ENCODE measurements at regions of chr14 and their contacts with region 1.

Region 1: DNA sequence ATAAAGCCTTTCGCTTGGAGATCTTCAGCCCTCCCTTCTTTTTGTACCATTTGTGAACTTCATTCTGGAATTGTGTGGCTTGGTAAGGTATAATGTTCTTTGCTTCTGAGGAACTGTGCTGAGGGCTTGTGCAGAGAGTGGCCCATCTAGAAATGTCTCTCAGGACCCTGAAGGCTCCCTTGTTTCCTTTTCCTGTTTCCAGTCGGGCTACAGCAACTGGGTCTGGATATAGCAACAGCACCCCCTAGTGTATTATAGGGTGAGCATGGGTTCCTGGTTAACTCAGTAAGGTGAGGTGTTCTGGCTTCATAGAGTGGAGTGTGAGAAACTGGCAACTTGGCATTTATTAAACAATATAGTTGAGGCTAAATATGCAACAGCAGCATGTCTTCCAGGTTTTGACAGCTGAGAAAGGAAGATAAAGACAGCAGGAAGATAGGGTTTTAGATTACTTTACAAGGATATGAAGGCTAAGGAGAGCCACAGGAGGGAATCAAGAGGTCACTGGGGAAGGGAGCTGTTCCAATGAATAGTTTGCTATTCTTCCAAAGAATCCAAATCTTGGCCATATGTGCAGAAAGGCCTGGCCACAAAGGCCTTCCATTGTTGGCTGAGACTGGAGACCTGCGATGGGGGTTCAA is 49.1 kb upstream of the RNU6-8 start:
- DNase-seq: no peak
- H3K4me3 ChIP-seq: no peak overlapping the region
- H3K27ac ChIP-seq: peak overlapping the region in 1 of 8 donors; percentile 27
- H3K4me1 ChIP-seq: peaks cover 0 to 16% (median 1%) of the 10 kb centered on the region in 6 donors
- H3K27me3 ChIP-seq: no peaks in the 10 kb centered on the region
- CTCF ChIP-seq: peak; percentile 67 to 87 (median 82)
- POLR2A ChIP-seq: no peak

Region 2: DNA sequence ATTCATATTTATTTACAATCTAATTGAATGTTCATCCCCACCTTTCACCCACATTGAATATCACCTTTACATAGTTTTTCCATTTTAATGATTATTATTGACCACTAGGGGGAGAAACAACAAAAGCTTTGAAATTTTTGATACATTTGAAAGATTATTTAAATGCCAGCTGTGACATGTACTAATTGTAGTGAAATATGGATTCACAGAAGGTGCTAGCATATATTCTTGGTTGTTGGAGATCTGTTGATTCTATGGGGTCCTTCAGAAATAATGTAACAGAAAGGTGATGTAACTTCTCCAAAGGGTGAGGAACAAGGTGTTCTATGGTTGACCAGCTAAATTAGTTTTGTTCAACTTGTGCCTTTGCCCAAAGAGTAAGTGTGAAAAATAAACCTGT is 741.9 kb before region 1 on chr14:
- intact Hi-C with region 1: loop called (anchors 5 kb)
- DNase-seq: no peak
- H3K4me3 ChIP-seq: no peak overlapping the region
- H3K27ac ChIP-seq: no peak overlapping the region
- H3K4me1 ChIP-seq: peaks cover 0 to 5% (median 0%) of the 10 kb centered on the region in 6 donors
- H3K27me3 ChIP-seq: no peaks in the 10 kb centered on the region
- CTCF ChIP-seq: peak; percentile 20 to 69 (median 54)
- POLR2A ChIP-seq: no peak

Region 3: GRCh38 chr14:31926123-31926522 is 326.0 kb before region 1 on chr14:
- intact Hi-C with region 1: loop called (anchors 5 kb)
- DNase-seq: no peak
- H3K4me3 ChIP-seq: no peak overlapping the region
- H3K27ac ChIP-seq: peak overlapping the region in 6 of 8 donors; percentile 55 to 73 (median 70)
- H3K4me1 ChIP-seq: peaks cover 0 to 21% (median 6%) of the 10 kb centered on the region in 6 donors
- H3K27me3 ChIP-seq: no peaks in the 10 kb centered on the region
- CTCF ChIP-seq: peak in 9 of 11 experiments; percentile 18 to 59 (median 51)
- POLR2A ChIP-seq: no peak

Region 4: GRCh38 chr14:32076278-32077080 is 175.7 kb before region 1 on chr14:
- intact Hi-C with region 1: loop called (anchors 5 kb)
- DNase-seq: peak; percentile 97
- H3K4me3 ChIP-seq: peak overlapping the region; percentile 68 to 94 (median 88)
- H3K27ac ChIP-seq: peak overlapping the region; percentile 93 to 97 (median 94)
- H3K4me1 ChIP-seq: peaks cover 1 to 68% (median 39%) of the 10 kb centered on the region in 6 donors
- H3K27me3 ChIP-seq: no peaks in the 10 kb centered on the region
- CTCF ChIP-seq: no peak
- POLR2A ChIP-seq: peak in 2 of 3 donors; percentile 3 to 50

Measured in spleen (tissue), 13 donors.